Common myeloid progenitor, CD34-positive (primary cell): ENCODE measurements at regions of chr1 and their contacts with region 1.

Region 1: GRCh38 chr1:226201029-226201593 is 14.6 kb upstream of the ACBD3 start:
- DNase-seq: peak; percentile 33 to 55 (median 54)
- H3K4me3 ChIP-seq: no peak overlapping the region
- H3K27ac ChIP-seq: no peak overlapping the region
- H3K4me1 ChIP-seq: peaks cover 0 to 3% (median 0%) of the 10 kb centered on the region in 4 experiments
- H3K27me3 ChIP-seq: no peaks in the 10 kb centered on the region

Region 2: DNA sequence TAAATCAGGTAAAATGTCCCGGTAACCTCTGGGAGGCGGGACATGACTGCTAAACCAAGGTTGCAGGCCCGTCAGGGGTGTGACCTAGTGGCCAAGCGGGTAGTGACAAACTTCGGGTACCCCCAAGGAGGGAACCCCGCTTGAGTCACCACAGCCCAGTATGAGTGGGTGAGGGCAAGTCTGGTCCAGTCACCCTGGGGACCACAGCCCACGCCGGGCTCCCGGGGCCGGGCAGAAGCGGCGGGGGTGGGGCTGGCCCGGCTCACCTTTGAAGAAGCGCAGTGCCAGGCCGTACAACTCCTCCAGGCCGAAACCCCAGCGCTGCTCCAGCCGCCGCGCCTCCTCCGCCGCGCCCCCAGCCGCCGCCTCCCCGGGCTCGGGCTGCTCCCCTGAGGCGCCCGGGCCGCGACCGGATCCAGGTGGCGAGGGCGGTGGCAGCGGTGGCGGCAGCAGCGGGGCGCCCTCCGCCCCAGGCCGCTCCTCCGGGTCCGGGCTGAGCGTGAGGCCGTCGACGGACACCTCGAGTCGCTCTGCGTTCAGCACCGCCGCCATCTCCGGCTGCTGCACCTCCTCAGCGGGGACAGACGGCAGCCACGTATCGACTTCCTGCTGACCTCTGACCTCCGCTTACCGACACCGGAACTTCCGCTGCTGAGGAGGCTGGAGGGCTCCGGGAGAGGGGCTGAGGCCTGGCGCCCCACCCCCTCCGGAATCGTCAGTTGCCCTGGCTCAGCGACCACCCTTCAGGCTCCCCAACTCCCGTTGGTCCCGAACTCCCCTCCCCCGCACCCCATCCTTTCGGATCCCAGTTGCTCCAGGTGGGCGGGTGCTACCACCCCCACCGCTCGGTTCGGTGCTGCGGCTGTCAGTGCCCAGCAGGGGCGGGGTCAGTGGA is 14.7 kb before region 1 on chr1 and contains the start of gene ACBD3:
- CTCF ChIA-PET with region 1: interaction called, 28 read pairs
- POLR2A ChIA-PET with region 1: interaction called, 7 read pairs
- DNase-seq: peak; percentile 86 to 93 (median 90)
- H3K4me3 ChIP-seq: peak within 1 kb of the TSS; percentile 41 to 95 (median 93)
- H3K27ac ChIP-seq: peak within 1 kb of the TSS; percentile 68 to 87
- H3K4me1 ChIP-seq: peaks cover 17 to 37% (median 30%) of the 10 kb centered on the region in 4 experiments
- H3K27me3 ChIP-seq: no peaks in the 10 kb centered on the region

Region 3: DNA sequence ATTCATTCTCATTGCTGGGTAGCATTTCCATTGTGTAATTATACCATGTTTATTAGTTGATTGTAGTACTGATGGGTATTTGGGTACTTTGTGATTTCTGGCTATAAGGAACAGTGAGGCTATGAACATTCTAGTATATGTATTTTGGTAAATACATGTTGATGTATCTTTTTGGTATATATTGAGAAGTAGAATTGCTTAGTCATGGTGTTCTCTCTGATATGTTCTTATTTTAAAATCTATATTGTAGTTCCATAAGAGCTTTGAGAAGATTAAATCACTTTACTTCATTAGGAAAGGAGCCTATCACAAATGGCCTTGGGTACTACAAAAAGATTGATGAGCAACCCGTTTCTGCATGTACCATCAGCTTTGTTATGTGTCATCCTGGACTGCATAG is 35.7 kb after region 1 on chr1:
- CTCF ChIA-PET with region 1: no interaction called
- POLR2A ChIA-PET with region 1: no interaction called
- DNase-seq: no peak
- H3K4me3 ChIP-seq: no peak overlapping the region
- H3K27ac ChIP-seq: no peak overlapping the region
- H3K4me1 ChIP-seq: peaks cover 0 to 7% (median 1%) of the 10 kb centered on the region in 4 experiments
- H3K27me3 ChIP-seq: no peaks in the 10 kb centered on the region

Region 4: GRCh38 chr1:226332947-226333346 is 131.8 kb after region 1 on chr1:
- CTCF ChIA-PET with region 1: interaction called, 12 read pairs
- POLR2A ChIA-PET with region 1: no interaction called
- DNase-seq: peak in 2 of 3 donors; percentile 32 to 59
- H3K4me3 ChIP-seq: peak overlapping the region in 3 of 7 experiments; percentile 6 to 63 (median 20)
- H3K27ac ChIP-seq: no peak overlapping the region
- H3K4me1 ChIP-seq: peaks cover under 1 to 13% (median 6%) of the 10 kb centered on the region in 4 experiments
- H3K27me3 ChIP-seq: no peaks in the 10 kb centered on the region

Region 5: GRCh38 chr1:226674892-226675714 is 474.0 kb after region 1 on chr1:
- CTCF ChIA-PET with region 1: no interaction called
- POLR2A ChIA-PET with region 1: no interaction called
- DNase-seq: peak; percentile 95 to 99 (median 97)
- H3K4me3 ChIP-seq: peak overlapping the region in 6 of 7 experiments; percentile 11 to 70 (median 40)
- H3K27ac ChIP-seq: peak overlapping the region; percentile 19 to 80
- H3K4me1 ChIP-seq: peaks cover 57 to 86% (median 66%) of the 10 kb centered on the region in 4 experiments
- H3K27me3 ChIP-seq: no peaks in the 10 kb centered on the region